Right cardiac atrium (tissue), 5 donors: ENCODE measurements at regions of chr9 and their contacts with region 1.

Region 1: GRCh38 chr9:19174127-19174912 is 47.0 kb upstream of the PLIN2 start:
- DNase-seq: peak; percentile 68 to 85 (median 84)
- ATAC-seq: peak; percentile 89 to 92
- H3K4me3 ChIP-seq: no peak overlapping the region
- H3K27ac ChIP-seq: no peak overlapping the region
- H3K4me1 ChIP-seq: peaks cover 5% of the 10 kb centered on the region
- H3K27me3 ChIP-seq: no peaks in the 10 kb centered on the region

Region 2: GRCh38 chr9:19116107-19116790 is 58.1 kb before region 1 on chr9:
- intact Hi-C with region 1: loop called in 2 of 4 experiments (anchors 5 to 10 kb)
- DNase-seq: peak; percentile 43 to 70 (median 67)
- ATAC-seq: peak; percentile 69 to 78
- H3K4me3 ChIP-seq: no peak overlapping the region
- H3K27ac ChIP-seq: peak overlapping the region; percentile 7
- H3K4me1 ChIP-seq: peaks cover 4% of the 10 kb centered on the region
- H3K27me3 ChIP-seq: no peaks in the 10 kb centered on the region

Region 3: GRCh38 chr9:19127881-19128500 is 46.3 kb before region 1 on chr9:
- intact Hi-C with region 1: loop called in 1 of 4 experiments (anchors 10 kb)
- DNase-seq: peak; percentile 57 to 80 (median 73)
- ATAC-seq: peak; percentile 15 to 27
- H3K4me3 ChIP-seq: peak overlapping the region; percentile 81
- H3K27ac ChIP-seq: peak overlapping the region; percentile 92
- H3K4me1 ChIP-seq: peaks cover 6% of the 10 kb centered on the region
- H3K27me3 ChIP-seq: no peaks in the 10 kb centered on the region

Region 4: DNA sequence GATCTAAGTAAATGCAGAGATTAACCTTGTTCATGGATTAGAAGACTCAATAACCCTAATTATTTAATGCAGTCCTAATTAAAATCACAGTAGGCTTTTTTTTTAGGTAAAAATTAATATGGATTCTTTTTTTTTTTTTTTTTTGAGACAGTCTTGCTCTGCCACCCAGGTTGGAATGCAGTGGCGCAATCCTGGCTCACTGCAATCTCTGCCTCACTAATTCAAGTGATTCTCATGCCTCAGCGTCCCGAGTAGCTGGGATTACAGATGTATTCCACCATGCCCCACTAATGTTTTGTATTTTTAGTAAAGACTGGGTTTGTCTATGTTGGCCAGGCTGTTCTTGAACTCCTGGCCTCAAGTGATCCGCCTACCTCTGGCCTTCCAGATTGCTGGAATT is 96.8 kb after region 1 on chr9:
- intact Hi-C with region 1: no loop called
- DNase-seq: no peak
- ATAC-seq: no peak
- H3K4me3 ChIP-seq: no peak overlapping the region
- H3K27ac ChIP-seq: no peak overlapping the region
- H3K4me1 ChIP-seq: peaks cover 4% of the 10 kb centered on the region
- H3K27me3 ChIP-seq: no peaks in the 10 kb centered on the region

Region 5: DNA sequence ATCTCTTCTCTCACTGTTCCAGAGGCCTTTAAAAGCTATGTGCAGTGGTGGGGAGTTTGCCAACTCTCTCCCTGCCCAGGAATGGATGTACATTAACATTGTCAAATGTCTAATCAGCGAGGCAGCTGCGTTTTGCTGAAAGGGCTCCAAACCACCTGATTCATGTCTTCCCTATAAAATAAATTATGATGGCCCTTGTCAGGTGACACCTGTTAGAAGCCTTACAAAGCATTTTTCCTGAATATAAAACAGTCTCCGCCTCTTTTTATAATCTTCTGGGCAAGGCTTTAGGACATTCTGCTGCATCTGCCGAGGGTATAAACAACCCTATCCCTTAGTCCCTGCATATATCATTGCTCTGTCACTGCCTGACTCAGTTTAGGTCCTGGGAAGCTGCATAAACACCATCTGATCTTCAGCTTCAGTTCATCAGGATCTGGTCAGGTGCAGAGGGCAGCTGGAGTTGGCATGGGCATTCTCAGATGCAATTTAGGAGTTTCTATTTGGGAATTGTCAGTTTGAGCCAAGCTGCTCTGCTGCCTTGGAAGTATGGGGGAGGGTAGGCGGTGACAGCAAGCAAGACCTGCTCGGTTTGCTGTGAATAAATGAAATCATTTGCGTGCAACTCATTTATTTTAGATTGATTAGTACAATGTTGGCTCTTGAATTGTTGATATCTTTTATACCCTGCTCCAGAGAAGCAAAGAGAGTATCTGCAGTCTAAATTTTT is 337.9 kb after region 1 on chr9:
- intact Hi-C with region 1: no loop called
- DNase-seq: no peak
- ATAC-seq: no peak
- H3K4me3 ChIP-seq: no peak overlapping the region
- H3K27ac ChIP-seq: no peak overlapping the region
- H3K4me1 ChIP-seq: no peaks in the 10 kb centered on the region
- H3K27me3 ChIP-seq: no peaks in the 10 kb centered on the region